OCI-LY7 (cell line): ENCODE measurements at regions of chr2 and their contacts with region 1.

Region 1: GRCh38 chr2:77228391-77228790 is 293.8 kb downstream of the LRRTM4 start:
- DNase-seq: no peak
- H3K4me3 ChIP-seq: no peak overlapping the region
- H3K27ac ChIP-seq: no peak overlapping the region
- H3K4me1 ChIP-seq: no peaks in the 10 kb centered on the region
- CTCF ChIP-seq: no peak

Region 2: GRCh38 chr2:77161009-77161408 is 67.4 kb before region 1 on chr2:
- CTCF ChIA-PET with region 1: no interaction called
- POLR2A ChIA-PET with region 1: no interaction called
- intact Hi-C with region 1: no loop called
- DNase-seq: no peak
- H3K4me3 ChIP-seq: no peak overlapping the region
- H3K27ac ChIP-seq: no peak overlapping the region
- H3K4me1 ChIP-seq: no peaks in the 10 kb centered on the region
- CTCF ChIP-seq: no peak

Region 3: GRCh38 chr2:77210725-77211124 is 17.7 kb before region 1 on chr2:
- CTCF ChIA-PET with region 1: no interaction called
- POLR2A ChIA-PET with region 1: interaction called, 10 read pairs
- intact Hi-C with region 1: no loop called
- DNase-seq: no peak
- H3K4me3 ChIP-seq: no peak overlapping the region
- H3K27ac ChIP-seq: no peak overlapping the region
- H3K4me1 ChIP-seq: no peaks in the 10 kb centered on the region
- CTCF ChIP-seq: no peak

Region 4: GRCh38 chr2:77642339-77642738 is 413.9 kb after region 1 on chr2:
- CTCF ChIA-PET with region 1: no interaction called
- POLR2A ChIA-PET with region 1: no interaction called
- intact Hi-C with region 1: no loop called
- DNase-seq: no peak
- H3K4me3 ChIP-seq: no peak overlapping the region
- H3K27ac ChIP-seq: no peak overlapping the region
- H3K4me1 ChIP-seq: no peaks in the 10 kb centered on the region
- CTCF ChIP-seq: no peak